ENCODE measurements at regions of chr3 and their contacts with region 1.

Region 1: DNA sequence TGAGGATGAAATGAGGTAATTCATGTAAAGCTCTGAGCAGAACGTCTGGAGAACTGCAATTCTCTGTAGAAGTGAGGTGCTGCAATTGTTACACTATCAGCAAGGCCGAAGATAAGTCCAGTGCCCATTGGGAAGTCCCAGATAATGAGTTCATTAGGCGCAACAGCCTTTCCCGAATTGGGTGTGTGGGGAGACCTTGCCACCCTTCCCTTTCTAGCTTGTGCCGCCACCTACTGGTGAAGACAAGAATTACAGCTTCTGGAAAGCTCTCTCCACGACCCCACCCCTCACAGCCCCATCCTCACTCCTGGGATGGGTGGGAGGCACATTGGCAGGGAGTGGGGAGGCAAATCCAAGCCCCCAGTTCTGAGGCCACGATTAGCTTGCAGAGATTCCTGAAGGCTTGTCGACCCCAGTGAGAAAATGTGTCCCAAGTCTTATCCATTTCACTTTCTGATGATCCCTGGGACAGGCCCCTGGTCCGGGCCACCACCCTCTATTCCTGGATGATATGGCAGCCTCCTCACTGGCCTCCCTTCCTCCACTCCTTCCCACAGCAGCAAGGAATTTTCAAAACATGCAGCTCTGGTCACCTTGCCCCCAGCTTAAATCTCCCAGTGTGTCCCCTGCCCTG is 36.4 kb downstream of the FAM3D start:
- DNase-seq: peak; percentile 16 to 72 (median 57)
- ATAC-seq: peak; percentile 56
- H3K4me3 ChIP-seq: no peak overlapping the region
- H3K4me3 Mint-ChIP-seq: no peak overlapping the region
- H3K27ac ChIP-seq: no peak overlapping the region
- H3K27ac Mint-ChIP-seq: no peak overlapping the region
- H3K4me1 ChIP-seq: no peaks in the 10 kb centered on the region
- H3K4me1 Mint-ChIP-seq: no peaks in the 10 kb centered on the region
- H3K27me3 ChIP-seq: no peaks in the 10 kb centered on the region
- H3K27me3 Mint-ChIP-seq: peaks cover 12% of the 10 kb centered on the region
- CTCF ChIP-seq: peak; percentile 74

Region 2: GRCh38 chr3:58177747-58178527 is 452.3 kb before region 1 on chr3:
- CTCF ChIA-PET with region 1: no interaction called
- POLR2A ChIA-PET with region 1: no interaction called
- intact Hi-C with region 1: loop called in 1 of 2 experiments (anchors 5 kb)
- DNase-seq: peak; percentile 74 to 95 (median 87)
- ATAC-seq: peak; percentile 94
- H3K4me3 ChIP-seq: peak overlapping the region; percentile 34 to 48
- H3K4me3 Mint-ChIP-seq: peak overlapping the region; percentile 69
- H3K27ac ChIP-seq: no peak overlapping the region
- H3K27ac Mint-ChIP-seq: no peak overlapping the region
- H3K4me1 ChIP-seq: peaks cover 14% of the 10 kb centered on the region
- H3K4me1 Mint-ChIP-seq: peaks cover 13% of the 10 kb centered on the region
- H3K27me3 ChIP-seq: peaks cover 0 to 2% of the 10 kb centered on the region in 2 experiments
- H3K27me3 Mint-ChIP-seq: peaks cover 9% of the 10 kb centered on the region
- CTCF ChIP-seq: peak; percentile 79

Region 3: DNA sequence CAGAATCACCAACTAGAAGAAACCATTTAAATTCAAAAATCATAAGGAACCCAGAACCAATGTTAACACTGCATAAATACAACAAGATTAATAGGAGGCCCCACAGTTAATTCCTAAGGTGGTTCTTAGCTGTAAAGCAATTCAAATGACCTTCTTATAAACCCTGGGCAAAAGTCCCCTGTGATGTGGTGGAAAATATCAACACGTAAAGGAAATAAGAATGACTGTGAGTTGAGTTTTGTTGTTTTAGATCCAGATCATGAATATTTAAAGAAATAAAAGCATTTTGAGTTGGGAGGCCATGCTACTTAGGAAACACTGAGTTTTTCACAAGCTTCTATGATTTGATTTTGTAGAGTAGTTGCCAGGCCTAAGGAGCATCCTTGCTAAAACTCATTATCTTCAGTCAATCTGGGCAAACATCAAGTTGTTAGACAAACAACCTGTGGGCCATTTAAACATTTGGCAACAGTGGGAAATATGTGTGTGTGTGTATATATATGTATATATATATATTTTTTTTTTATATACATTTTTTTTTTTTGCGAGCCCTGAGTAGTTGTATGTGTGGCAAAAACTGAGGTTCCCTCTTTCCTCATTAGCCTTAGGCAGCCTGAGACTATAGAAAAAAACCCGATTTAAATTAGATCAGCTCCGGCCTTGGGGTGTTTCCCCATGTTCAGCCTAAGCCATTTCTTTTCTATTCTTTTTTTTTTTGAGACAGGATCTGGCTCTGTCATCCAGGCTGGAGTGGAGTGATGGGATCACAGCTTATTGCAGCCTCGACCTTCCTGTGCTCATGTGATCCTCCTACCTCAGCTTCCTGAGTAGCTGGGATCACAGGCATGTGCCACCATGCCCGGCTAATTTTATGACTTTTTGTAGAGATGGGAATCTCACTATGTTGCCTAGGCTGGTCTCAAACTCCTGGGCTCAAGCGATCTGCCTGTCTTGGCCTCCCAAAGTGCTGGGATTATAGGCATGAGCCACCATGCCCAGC is 305.5 kb before region 1 on chr3:
- CTCF ChIA-PET with region 1: interaction called, 6 read pairs
- POLR2A ChIA-PET with region 1: no interaction called
- intact Hi-C with region 1: loop called in 1 of 2 experiments (anchors 2 kb)
- DNase-seq: peak in 1 of 9 experiments; percentile 26
- ATAC-seq: peak; percentile 50
- H3K4me3 ChIP-seq: no peak overlapping the region
- H3K4me3 Mint-ChIP-seq: no peak overlapping the region
- H3K27ac ChIP-seq: no peak overlapping the region
- H3K27ac Mint-ChIP-seq: peak overlapping the region; percentile 52
- H3K4me1 ChIP-seq: peaks cover 7% of the 10 kb centered on the region
- H3K4me1 Mint-ChIP-seq: peaks cover 13% of the 10 kb centered on the region
- H3K27me3 ChIP-seq: no peaks in the 10 kb centered on the region
- H3K27me3 Mint-ChIP-seq: no peaks in the 10 kb centered on the region
- CTCF ChIP-seq: no peak

Region 4: DNA sequence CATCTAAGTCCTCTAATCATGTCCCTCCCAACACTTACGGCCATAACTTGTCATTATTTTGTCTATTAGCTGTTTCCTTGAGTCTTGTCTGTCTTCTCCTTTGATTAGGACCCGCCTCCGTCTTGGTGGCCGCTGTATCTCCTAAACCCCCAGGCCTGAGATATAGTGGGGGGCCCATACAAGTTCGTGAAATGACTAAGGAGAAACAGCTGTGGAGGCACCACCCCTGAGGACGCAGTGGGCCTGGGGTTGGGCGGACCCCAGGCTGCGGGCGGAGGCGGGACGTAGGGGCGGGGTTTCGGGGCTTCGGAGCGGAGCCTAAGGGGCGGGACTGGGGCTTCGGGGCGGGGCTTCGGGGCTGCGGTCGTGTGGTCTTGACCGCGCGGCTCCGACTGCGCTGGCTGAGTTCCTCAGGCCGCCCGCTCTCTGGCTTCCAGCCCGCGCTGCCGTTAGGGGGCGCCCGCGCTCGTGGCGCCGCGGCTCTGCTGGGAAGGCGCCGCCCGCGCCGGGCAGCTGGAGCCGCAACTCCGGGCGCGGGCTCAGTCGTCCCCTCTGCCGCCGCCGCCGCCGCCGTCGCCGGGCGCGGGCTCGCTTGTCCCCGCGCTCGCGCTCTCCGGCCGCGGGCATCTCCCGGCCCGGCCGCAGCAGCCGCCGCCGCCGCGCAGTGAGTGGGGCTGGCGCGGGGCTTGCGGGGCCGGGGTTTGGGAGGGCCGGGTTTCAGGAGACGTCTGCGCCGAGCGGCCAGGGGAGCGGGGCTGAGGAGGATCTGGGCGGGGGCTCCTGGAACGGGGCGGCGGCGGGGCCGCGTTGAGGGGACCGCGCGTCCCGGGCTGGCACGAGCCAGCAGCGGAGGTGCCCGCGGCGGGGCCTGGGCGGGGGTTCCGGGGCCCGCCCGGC is 138.4 kb before region 1 on chr3 and contains the start of gene KCTD6:
- CTCF ChIA-PET with region 1: interaction called, 10 read pairs
- POLR2A ChIA-PET with region 1: no interaction called
- intact Hi-C with region 1: no loop called
- DNase-seq: peak; percentile 74 to 93 (median 85)
- ATAC-seq: peak; percentile 81
- H3K4me3 ChIP-seq: peak within 1 kb of the TSS; percentile 72 to 88
- H3K4me3 Mint-ChIP-seq: peak within 1 kb of the TSS; percentile 93
- H3K27ac ChIP-seq: peak within 1 kb of the TSS; percentile 50 to 54
- H3K27ac Mint-ChIP-seq: peak within 1 kb of the TSS; percentile 91
- H3K4me1 ChIP-seq: peaks cover 45% of the 10 kb centered on the region
- H3K4me1 Mint-ChIP-seq: peaks cover 54% of the 10 kb centered on the region
- H3K27me3 ChIP-seq: no peaks in the 10 kb centered on the region
- H3K27me3 Mint-ChIP-seq: no peaks in the 10 kb centered on the region
- CTCF ChIP-seq: peak; percentile 33
- total RNA-seq, gene KCTD6: 4.2 to 4.5 TPM

Region 5: GRCh38 chr3:58617338-58617761 is 12.8 kb before region 1 on chr3:
- CTCF ChIA-PET with region 1: interaction called, 18 read pairs
- POLR2A ChIA-PET with region 1: no interaction called
- intact Hi-C with region 1: no loop called
- DNase-seq: no peak
- ATAC-seq: no peak
- H3K4me3 ChIP-seq: no peak overlapping the region
- H3K4me3 Mint-ChIP-seq: no peak overlapping the region
- H3K27ac ChIP-seq: no peak overlapping the region
- H3K27ac Mint-ChIP-seq: no peak overlapping the region
- H3K4me1 ChIP-seq: no peaks in the 10 kb centered on the region
- H3K4me1 Mint-ChIP-seq: no peaks in the 10 kb centered on the region
- H3K27me3 ChIP-seq: no peaks in the 10 kb centered on the region
- H3K27me3 Mint-ChIP-seq: no peaks in the 10 kb centered on the region
- CTCF ChIP-seq: no peak